Activated naive CD4-positive, alpha-beta T cell treated with anti-CD3 and anti-CD28 coated beads for 36 hours (primary cell): ENCODE measurements at regions of chrX and their contacts with region 1.

Region 1: DNA sequence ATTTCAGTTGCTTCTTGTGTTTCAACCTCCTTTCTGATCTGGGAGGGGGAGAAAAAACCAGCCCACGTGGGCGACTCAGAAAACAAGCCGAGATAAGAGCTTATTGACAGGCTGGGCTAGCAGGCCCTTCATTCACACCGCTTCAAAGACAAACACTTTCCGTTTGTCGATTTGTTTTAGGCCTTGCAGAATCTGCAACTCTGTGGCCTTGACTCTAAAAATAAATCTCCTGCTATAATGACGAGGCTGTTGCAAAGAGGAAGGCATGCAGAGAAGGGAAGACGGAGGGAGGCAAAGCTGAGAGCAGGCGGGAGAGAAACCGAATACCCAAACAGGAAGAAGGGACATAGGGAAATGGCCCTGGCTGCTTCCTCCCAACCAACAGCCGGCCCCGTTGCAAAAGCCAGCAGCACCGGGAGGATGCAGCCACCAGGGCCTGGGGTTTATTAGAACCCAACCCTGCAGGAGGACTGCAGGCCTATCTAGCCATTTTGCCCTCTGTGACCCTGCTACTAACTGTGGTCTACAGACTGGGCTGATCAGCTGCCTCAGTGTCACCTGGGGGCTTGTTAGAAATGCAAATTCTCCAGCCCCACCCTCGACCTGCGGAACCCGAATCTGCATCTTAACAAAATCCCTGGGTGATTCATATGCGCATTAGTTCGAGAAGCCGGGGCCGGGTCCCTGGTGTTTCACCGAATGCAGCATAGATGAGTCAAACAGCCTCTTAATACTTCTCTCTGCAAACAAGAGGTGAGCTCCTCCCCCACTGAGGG is 325.5 kb downstream of the BCOR start:
- DNase-seq: peak; percentile 87
- H3K4me3 Mint-ChIP-seq: peak overlapping the region; percentile 15
- H3K27ac Mint-ChIP-seq: peak overlapping the region; percentile 83
- H3K4me1 Mint-ChIP-seq: peaks cover 40% of the 10 kb centered on the region
- H3K27me3 Mint-ChIP-seq: no peaks in the 10 kb centered on the region

Region 2: DNA sequence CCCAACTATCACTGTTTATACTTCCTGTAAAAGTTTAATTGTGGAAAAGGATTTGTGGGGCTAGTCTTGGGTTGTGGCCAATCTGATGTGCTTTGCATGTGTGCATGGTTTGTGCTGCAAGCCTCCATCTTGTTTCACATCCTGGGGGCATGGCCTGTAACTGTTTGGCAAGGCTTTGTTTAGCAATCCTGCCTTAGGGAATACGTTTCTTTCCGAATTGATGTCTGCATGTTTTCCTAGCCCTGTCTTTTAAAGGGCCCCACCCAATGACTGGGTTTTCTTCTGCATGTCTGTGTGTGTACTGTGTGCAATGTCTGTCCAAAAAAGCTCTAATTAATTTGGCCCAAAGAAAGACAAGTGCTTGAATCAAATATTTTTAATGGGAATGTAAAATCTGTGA is 1045.6 kb before region 1 on chrX:
- CTCF ChIA-PET with region 1: no interaction called
- intact Hi-C with region 1: no loop called
- DNase-seq: no peak
- H3K4me3 Mint-ChIP-seq: no peak overlapping the region
- H3K27ac Mint-ChIP-seq: no peak overlapping the region
- H3K4me1 Mint-ChIP-seq: peaks cover under 1% of the 10 kb centered on the region
- H3K27me3 Mint-ChIP-seq: no peaks in the 10 kb centered on the region

Region 3: DNA sequence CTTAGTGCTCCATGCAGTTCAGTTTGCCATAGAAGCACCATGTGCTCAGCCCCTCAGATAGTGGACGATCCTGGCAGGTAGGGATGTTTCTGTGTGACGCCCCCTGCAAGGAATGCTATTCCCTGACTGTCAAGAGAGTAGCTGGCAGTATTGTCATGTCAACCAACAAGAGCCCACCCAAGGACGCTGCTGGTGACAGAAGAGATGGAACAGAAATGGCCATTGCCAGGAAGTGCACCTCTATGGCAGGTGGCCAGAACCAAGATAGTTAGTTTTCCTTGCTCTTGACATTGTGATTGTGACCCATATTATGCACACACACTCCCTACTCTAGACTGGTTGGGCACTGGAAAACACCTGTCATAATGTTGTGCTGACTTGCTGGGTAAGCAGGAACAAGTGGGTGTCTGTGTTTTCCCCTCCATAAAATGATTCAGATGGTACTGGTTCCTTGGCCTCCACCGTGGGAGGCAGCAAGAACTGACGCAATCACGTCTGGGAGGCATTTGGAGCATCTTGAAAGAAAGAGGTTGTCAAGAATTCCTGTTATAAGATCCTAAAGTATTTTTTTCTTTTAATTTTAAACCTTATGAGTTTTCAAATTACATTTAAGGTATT is 463.1 kb before region 1 on chrX:
- CTCF ChIA-PET with region 1: no interaction called
- intact Hi-C with region 1: loop called (anchors 1 kb)
- DNase-seq: peak; percentile 75
- H3K4me3 Mint-ChIP-seq: no peak overlapping the region
- H3K27ac Mint-ChIP-seq: peak overlapping the region; percentile 100
- H3K4me1 Mint-ChIP-seq: peaks cover 79% of the 10 kb centered on the region
- H3K27me3 Mint-ChIP-seq: no peaks in the 10 kb centered on the region

Region 4: DNA sequence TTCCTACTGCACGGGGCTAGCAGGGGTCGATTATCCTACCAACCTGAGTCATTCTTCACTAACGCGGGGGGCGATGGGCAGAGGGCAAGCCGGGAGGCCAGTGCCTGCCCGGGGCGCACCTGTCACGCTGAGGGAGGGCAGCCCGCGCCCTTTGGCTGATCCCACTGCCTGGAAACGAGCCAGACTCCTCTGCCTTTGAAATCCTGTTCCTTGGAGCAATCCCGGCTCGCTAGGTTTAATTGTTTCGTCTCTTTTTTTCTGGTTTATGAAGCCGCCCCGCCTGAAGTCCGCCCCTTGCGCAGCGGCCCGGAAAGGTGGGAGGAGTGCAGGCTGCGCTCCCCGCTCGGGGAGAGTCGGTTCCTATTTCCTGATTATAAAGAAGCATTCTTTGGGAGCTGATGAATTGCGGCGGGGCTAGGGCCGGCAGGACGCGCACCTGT is 158.7 kb before region 1 on chrX:
- CTCF ChIA-PET with region 1: no interaction called
- intact Hi-C with region 1: loop called (anchors 5 kb)
- DNase-seq: peak; percentile 29
- H3K4me3 Mint-ChIP-seq: peak overlapping the region; percentile 70
- H3K27ac Mint-ChIP-seq: peak overlapping the region; percentile 87
- H3K4me1 Mint-ChIP-seq: peaks cover 22% of the 10 kb centered on the region
- H3K27me3 Mint-ChIP-seq: no peaks in the 10 kb centered on the region

Region 5: DNA sequence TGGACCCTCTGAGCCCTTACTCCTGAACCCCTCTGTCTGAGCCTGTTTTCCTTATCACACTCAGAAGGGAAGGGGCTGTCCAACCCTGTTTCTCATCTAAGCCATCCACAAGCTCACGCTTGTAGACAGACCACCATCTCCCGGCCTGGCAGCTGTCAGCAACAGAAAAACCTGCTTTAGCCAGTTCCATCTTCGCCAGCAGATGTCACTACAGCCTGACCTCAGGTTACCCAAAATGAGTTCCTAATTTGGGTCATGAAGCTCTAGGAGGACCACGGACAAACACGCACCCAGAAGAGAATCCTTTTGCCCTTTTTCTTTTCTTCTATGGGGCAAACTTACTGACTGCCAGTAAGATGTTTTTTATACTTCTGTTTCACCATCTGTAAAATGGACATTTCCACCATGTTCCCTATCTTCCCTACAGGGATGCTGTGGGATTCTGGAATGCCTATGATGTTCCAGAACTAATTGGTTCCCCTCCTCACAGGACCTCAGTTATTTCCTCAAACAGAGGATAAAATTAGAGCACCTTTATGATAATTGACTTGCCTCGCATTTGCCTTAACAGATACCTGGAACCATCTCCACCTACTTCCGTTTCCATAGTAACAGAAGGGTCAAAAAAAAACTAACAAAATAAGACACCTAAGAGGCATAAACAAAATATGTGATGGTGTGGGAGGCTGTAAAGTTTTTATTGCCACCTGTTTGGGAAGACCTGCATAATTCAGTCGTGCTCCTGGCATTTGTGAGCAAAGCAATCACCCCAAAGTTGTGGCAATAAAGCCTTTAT is 119.7 kb before region 1 on chrX:
- CTCF ChIA-PET with region 1: no interaction called
- intact Hi-C with region 1: no loop called
- DNase-seq: peak; percentile 51
- H3K4me3 Mint-ChIP-seq: no peak overlapping the region
- H3K27ac Mint-ChIP-seq: no peak overlapping the region
- H3K4me1 Mint-ChIP-seq: peaks cover 13% of the 10 kb centered on the region
- H3K27me3 Mint-ChIP-seq: no peaks in the 10 kb centered on the region

Region 6: GRCh38 chrX:39874202-39874816 is 102.1 kb after region 1 on chrX:
- CTCF ChIA-PET with region 1: no interaction called
- intact Hi-C with region 1: loop called (anchors 5 kb)
- DNase-seq: peak; percentile 89
- H3K4me3 Mint-ChIP-seq: no peak overlapping the region
- H3K27ac Mint-ChIP-seq: peak overlapping the region; percentile 89
- H3K4me1 Mint-ChIP-seq: peaks cover 49% of the 10 kb centered on the region
- H3K27me3 Mint-ChIP-seq: no peaks in the 10 kb centered on the region

Region 7: GRCh38 chrX:40097497-40098263 is 325.4 kb after region 1 on chrX and contains the start of gene BCOR:
- CTCF ChIA-PET with region 1: no interaction called
- intact Hi-C with region 1: loop called (anchors 5 kb)
- DNase-seq: peak; percentile 75
- H3K4me3 Mint-ChIP-seq: peak within 1 kb of the TSS; percentile 86
- H3K27ac Mint-ChIP-seq: peak within 1 kb of the TSS; percentile 82
- H3K4me1 Mint-ChIP-seq: peaks cover 24% of the 10 kb centered on the region
- H3K27me3 Mint-ChIP-seq: no peaks in the 10 kb centered on the region
- total RNA-seq, gene BCOR: 29.1 to 29.9 TPM